CD4-positive, alpha-beta T cell (primary cell): ENCODE measurements at regions of chr2 and their contacts with region 1.

Region 1: DNA sequence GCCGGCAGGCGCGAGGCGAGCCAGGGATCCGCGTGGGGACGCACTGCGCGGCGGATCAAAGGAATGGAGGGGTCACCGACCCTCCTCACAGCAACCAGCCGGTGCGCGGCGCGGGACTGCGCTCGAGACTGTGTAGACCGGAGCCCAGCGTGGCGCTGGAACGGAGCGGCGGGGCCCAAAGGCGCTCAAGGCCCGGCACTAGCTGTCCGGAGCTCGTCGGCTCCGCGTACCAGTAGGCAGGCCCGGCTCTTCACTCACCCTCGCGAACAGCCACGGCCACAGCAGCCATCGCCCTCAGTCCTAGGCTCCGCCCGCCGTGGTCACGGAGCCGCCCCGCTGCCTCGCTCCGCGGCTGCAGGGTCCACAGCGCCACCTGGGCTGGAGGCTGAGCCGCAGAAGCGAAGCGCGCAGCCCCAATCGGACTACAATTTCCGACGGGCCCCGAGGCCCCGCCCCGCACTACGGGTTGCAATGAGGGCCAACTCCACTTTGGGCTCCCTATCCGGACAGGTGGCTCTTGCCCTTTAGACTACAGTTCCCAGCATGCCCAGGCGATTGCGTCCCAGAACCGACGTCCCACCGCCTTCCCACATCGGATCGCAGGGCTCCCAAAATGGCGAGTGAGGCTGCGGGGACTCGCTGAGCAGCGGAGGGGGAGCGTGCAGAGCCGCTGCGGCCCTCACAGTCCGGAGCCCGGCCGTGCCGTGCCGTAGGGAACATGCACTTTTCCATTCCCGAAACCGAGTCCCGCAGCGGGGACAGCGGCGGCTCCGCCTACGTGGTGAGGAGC is at the starts of genes EIF2B4 and SNX17:
- DNase-seq: peak; percentile 98 to 100 (median 99)
- ATAC-seq: peak; percentile 89
- H3K4me3 ChIP-seq: peak within 1 kb of the TSS; percentile 71
- H3K4me3 Mint-ChIP-seq: peak within 1 kb of the TSS; percentile 96
- H3K27ac ChIP-seq: peak within 1 kb of the TSS; percentile 86 to 88
- H3K27ac Mint-ChIP-seq: peak within 1 kb of the TSS; percentile 83
- H3K4me1 ChIP-seq: peaks cover 46% of the 10 kb centered on the region
- H3K4me1 Mint-ChIP-seq: peaks cover 42% of the 10 kb centered on the region
- H3K27me3 ChIP-seq: no peaks in the 10 kb centered on the region
- H3K27me3 Mint-ChIP-seq: no peaks in the 10 kb centered on the region
- CTCF ChIP-seq: peak; percentile 80
- total RNA-seq, gene EIF2B4: 33.2 to 34.0 TPM
- total RNA-seq, gene SNX17: 66.3 to 67.9 TPM

Region 2: GRCh38 chr2:25960920-25961319 is 1409.3 kb before region 1 on chr2:
- CTCF ChIA-PET with region 1: no interaction called
- POLR2A ChIA-PET with region 1: no interaction called
- intact Hi-C with region 1: no loop called
- DNase-seq: peak in 3 of 14 experiments; percentile 15 to 45 (median 45)
- ATAC-seq: no peak
- H3K4me3 ChIP-seq: no peak overlapping the region
- H3K4me3 Mint-ChIP-seq: no peak overlapping the region
- H3K27ac ChIP-seq: no peak overlapping the region
- H3K27ac Mint-ChIP-seq: no peak overlapping the region
- H3K4me1 ChIP-seq: peaks cover 8% of the 10 kb centered on the region
- H3K4me1 Mint-ChIP-seq: peaks cover 9% of the 10 kb centered on the region
- H3K27me3 ChIP-seq: no peaks in the 10 kb centered on the region
- H3K27me3 Mint-ChIP-seq: no peaks in the 10 kb centered on the region
- CTCF ChIP-seq: no peak

Region 3: GRCh38 chr2:26805241-26805676 is 565.0 kb before region 1 on chr2:
- CTCF ChIA-PET with region 1: no interaction called
- POLR2A ChIA-PET with region 1: no interaction called
- intact Hi-C with region 1: no loop called
- DNase-seq: no peak
- ATAC-seq: no peak
- H3K4me3 ChIP-seq: no peak overlapping the region
- H3K4me3 Mint-ChIP-seq: no peak overlapping the region
- H3K27ac ChIP-seq: no peak overlapping the region
- H3K27ac Mint-ChIP-seq: no peak overlapping the region
- H3K4me1 ChIP-seq: peaks cover 19% of the 10 kb centered on the region
- H3K4me1 Mint-ChIP-seq: peaks cover 22% of the 10 kb centered on the region
- H3K27me3 ChIP-seq: no peaks in the 10 kb centered on the region
- H3K27me3 Mint-ChIP-seq: no peaks in the 10 kb centered on the region
- CTCF ChIP-seq: no peak

Region 4: DNA sequence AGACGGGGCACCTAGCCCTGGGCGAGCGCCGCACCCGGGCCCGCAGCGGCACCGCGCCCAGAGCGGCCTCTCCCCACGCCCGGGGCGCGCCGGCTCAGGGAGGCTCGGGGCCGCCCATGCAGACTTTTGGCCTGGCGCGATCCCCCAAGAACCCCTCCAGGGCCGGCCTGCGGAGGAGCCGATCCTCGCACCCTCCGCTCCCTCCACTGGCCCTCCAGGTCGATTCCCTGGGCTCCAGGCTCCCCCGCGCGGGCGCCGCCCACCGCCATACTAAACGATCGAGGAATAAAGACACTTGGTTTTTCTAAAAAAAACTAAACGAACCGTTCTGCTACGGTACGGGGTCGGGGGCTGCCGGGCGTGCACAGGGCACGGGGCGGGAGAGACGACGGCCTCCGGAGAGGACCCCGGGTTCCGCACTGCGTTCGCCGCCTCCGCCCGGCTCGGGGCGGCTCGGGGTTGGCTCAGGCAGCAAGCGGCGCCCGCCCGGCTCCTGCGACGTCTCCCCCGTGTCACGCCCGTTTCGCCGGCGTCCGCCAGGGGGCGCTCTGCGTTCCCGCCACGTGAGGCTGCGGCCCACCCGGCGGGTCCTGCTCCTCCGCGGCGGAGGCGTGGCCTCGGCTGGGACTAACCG is 284.0 kb before region 1 on chr2:
- CTCF ChIA-PET with region 1: no interaction called
- POLR2A ChIA-PET with region 1: no interaction called
- intact Hi-C with region 1: loop called in 1 of 2 experiments (anchors 5 kb)
- DNase-seq: peak; percentile 91 to 99 (median 98)
- ATAC-seq: peak; percentile 92
- H3K4me3 ChIP-seq: peak overlapping the region; percentile 70
- H3K4me3 Mint-ChIP-seq: peak overlapping the region; percentile 91
- H3K27ac ChIP-seq: peak overlapping the region; percentile 65 to 70
- H3K27ac Mint-ChIP-seq: peak overlapping the region; percentile 81
- H3K4me1 ChIP-seq: peaks cover 50% of the 10 kb centered on the region
- H3K4me1 Mint-ChIP-seq: peaks cover 32% of the 10 kb centered on the region
- H3K27me3 ChIP-seq: no peaks in the 10 kb centered on the region
- H3K27me3 Mint-ChIP-seq: no peaks in the 10 kb centered on the region
- CTCF ChIP-seq: peak; percentile 75

Region 5: GRCh38 chr2:27202854-27203253 is 167.4 kb before region 1 on chr2:
- CTCF ChIA-PET with region 1: no interaction called
- POLR2A ChIA-PET with region 1: no interaction called
- intact Hi-C with region 1: no loop called
- DNase-seq: no peak
- ATAC-seq: no peak
- H3K4me3 ChIP-seq: no peak overlapping the region
- H3K4me3 Mint-ChIP-seq: no peak overlapping the region
- H3K27ac ChIP-seq: no peak overlapping the region
- H3K27ac Mint-ChIP-seq: no peak overlapping the region
- H3K4me1 ChIP-seq: peaks cover 10% of the 10 kb centered on the region
- H3K4me1 Mint-ChIP-seq: no peaks in the 10 kb centered on the region
- H3K27me3 ChIP-seq: no peaks in the 10 kb centered on the region
- H3K27me3 Mint-ChIP-seq: no peaks in the 10 kb centered on the region
- CTCF ChIP-seq: no peak

Region 6: DNA sequence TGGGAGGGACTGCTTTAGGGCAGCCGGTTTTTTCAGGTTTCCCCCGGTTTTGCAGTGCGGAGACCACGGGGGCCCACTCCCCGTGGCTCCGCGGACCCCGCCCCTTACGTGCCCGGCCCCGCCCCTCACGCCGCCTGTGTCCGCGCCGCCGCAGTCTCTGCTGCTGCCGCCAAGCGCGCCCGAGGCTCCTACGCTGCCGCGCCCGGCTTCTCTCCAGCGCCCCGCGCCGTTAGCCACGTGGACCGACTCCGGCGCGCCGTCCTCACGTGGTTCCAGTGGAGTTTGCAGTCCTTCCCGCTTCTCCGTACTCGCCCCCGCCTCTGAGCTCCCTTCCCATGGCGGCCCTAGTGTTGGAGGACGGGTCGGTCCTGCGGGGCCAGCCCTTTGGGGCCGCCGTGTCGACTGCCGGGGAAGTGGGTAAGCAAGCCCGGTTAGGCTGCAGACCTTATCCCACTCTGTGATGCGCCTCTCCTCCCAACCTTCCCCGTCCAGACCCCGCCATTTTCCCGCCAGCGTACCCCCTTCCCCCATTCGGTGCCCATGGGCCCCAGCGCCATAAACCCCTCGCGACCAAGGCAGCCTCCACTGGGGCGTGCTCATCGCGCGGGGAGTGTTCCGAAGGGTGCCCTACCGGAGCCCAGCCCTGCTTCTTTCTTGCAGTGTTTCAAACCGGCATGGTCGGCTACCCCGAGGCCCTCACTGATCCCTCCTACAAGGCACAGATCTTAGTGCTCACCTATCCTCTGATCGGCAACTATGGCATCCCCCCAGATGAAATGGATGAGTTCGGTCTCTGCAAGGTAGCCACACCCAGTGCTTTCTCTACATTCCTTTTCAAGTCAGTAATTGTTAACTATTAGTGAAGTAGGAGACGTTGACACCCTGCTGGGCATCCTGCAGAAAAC is 152.8 kb before region 1 on chr2 and contains the start of gene CAD:
- CTCF ChIA-PET with region 1: no interaction called
- POLR2A ChIA-PET with region 1: no interaction called
- intact Hi-C with region 1: loop called (anchors 5 kb)
- DNase-seq: peak; percentile 75 to 94 (median 84)
- ATAC-seq: peak; percentile 74
- H3K4me3 ChIP-seq: peak within 1 kb of the TSS; percentile 87
- H3K4me3 Mint-ChIP-seq: peak within 1 kb of the TSS; percentile 98
- H3K27ac ChIP-seq: peak within 1 kb of the TSS; percentile 67 to 75
- H3K27ac Mint-ChIP-seq: peak within 1 kb of the TSS; percentile 93
- H3K4me1 ChIP-seq: peaks cover 31% of the 10 kb centered on the region
- H3K4me1 Mint-ChIP-seq: peaks cover 45% of the 10 kb centered on the region
- H3K27me3 ChIP-seq: no peaks in the 10 kb centered on the region
- H3K27me3 Mint-ChIP-seq: no peaks in the 10 kb centered on the region
- CTCF ChIP-seq: no peak
- total RNA-seq, gene CAD: 20.0 to 20.3 TPM

Region 7: GRCh38 chr2:27380626-27381545 is 10.7 kb after region 1 on chr2 and contains the start of gene ZNF513:
- CTCF ChIA-PET with region 1: interaction called, 4 read pairs
- POLR2A ChIA-PET with region 1: interaction called, 30 read pairs
- intact Hi-C with region 1: loop called in 1 of 2 experiments (anchors 1 kb)
- DNase-seq: peak; percentile 75 to 94 (median 86)
- ATAC-seq: peak; percentile 92
- H3K4me3 ChIP-seq: peak within 1 kb of the TSS; percentile 66
- H3K4me3 Mint-ChIP-seq: peak within 1 kb of the TSS; percentile 93
- H3K27ac ChIP-seq: peak within 1 kb of the TSS; percentile 80 to 86
- H3K27ac Mint-ChIP-seq: peak within 1 kb of the TSS; percentile 91
- H3K4me1 ChIP-seq: peaks cover 18% of the 10 kb centered on the region
- H3K4me1 Mint-ChIP-seq: peaks cover 32% of the 10 kb centered on the region
- H3K27me3 ChIP-seq: no peaks in the 10 kb centered on the region
- H3K27me3 Mint-ChIP-seq: no peaks in the 10 kb centered on the region
- CTCF ChIP-seq: no peak
- total RNA-seq, gene ZNF513: 22.8 to 22.9 TPM

Region 8: GRCh38 chr2:27409321-27410073 is 39.3 kb after region 1 on chr2 and contains the start of gene PPM1G:
- CTCF ChIA-PET with region 1: interaction called, 7 read pairs
- POLR2A ChIA-PET with region 1: interaction called, 23 read pairs
- intact Hi-C with region 1: loop called (anchors 1 kb)
- DNase-seq: peak; percentile 92 to 98 (median 96)
- ATAC-seq: peak; percentile 95
- H3K4me3 ChIP-seq: peak within 1 kb of the TSS; percentile 82
- H3K4me3 Mint-ChIP-seq: peak within 1 kb of the TSS; percentile 90
- H3K27ac ChIP-seq: peak within 1 kb of the TSS; percentile 85 to 90
- H3K27ac Mint-ChIP-seq: peak within 1 kb of the TSS; percentile 82
- H3K4me1 ChIP-seq: peaks cover 33% of the 10 kb centered on the region
- H3K4me1 Mint-ChIP-seq: peaks cover 41% of the 10 kb centered on the region
- H3K27me3 ChIP-seq: no peaks in the 10 kb centered on the region
- H3K27me3 Mint-ChIP-seq: no peaks in the 10 kb centered on the region
- CTCF ChIP-seq: no peak
- total RNA-seq, gene PPM1G: 30.4 to 31.2 TPM

Region 9: GRCh38 chr2:27489498-27490397 is 119.5 kb after region 1 on chr2 and contains the start of gene IFT172:
- CTCF ChIA-PET with region 1: interaction called, 3 read pairs
- POLR2A ChIA-PET with region 1: no interaction called
- intact Hi-C with region 1: loop called (anchors 5 kb)
- DNase-seq: peak; percentile 97 to 100 (median 99)
- ATAC-seq: peak; percentile 85
- H3K4me3 ChIP-seq: peak within 1 kb of the TSS; percentile 61
- H3K4me3 Mint-ChIP-seq: peak within 1 kb of the TSS; percentile 80
- H3K27ac ChIP-seq: peak within 1 kb of the TSS; percentile 55 to 91
- H3K27ac Mint-ChIP-seq: peak within 1 kb of the TSS; percentile 93
- H3K4me1 ChIP-seq: peaks cover 20% of the 10 kb centered on the region
- H3K4me1 Mint-ChIP-seq: peaks cover 18% of the 10 kb centered on the region
- H3K27me3 ChIP-seq: peaks cover 11 to 13% of the 10 kb centered on the region in 2 experiments
- H3K27me3 Mint-ChIP-seq: peaks cover 12% of the 10 kb centered on the region
- CTCF ChIP-seq: no peak
- total RNA-seq, gene IFT172: 13.3 to 14.4 TPM